Head of caudate nucleus (tissue), 42 donors: ENCODE measurements at regions of chr17 and their contacts with region 1.

Region 1: GRCh38 chr17:50547035-50547735 is at the start of gene SPATA20:
- DNase-seq: peak; percentile 73 to 94 (median 88)

Region 2: GRCh38 chr17:50397111-50397918 is 149.9 kb before region 1 on chr17 and contains the start of gene LRRC59:
- intact Hi-C with region 1: no loop called
- DNase-seq: peak; percentile 70 to 94 (median 88)

Region 3: GRCh38 chr17:50689956-50690886 is 143.0 kb after region 1 on chr17:
- intact Hi-C with region 1: loop called (anchors 5 kb)
- DNase-seq: peak in 35 of 42 donors; percentile 11 to 74 (median 44)

Region 4: DNA sequence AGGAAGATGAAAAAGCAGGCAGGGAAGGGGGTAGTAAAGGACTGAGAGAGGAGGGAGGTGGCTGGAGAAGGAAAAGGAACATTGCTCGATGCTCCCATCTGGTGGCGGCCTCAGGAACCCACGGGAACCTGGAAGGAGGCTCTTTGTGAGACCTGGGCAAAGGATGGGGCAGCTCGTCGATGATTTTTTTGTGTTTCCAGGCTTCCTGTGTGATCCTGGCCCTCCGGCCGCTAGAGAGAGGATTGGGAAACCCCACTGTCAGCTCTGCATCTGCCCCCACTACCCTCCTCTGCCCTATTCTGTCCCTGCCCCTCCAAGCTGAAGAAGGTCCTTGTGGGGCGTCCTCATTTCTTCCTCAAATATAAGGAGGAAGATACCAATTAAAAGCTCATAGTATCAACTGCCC is 294.8 kb after region 1 on chr17:
- intact Hi-C with region 1: loop called (anchors 5 kb)
- DNase-seq: peak; percentile 46 to 94 (median 86)